BJ (cell line): ENCODE measurements at regions of chr11 and their contacts with region 1.

Region 1: GRCh38 chr11:62556108-62556871 is 9.7 kb upstream of the AHNAK start:
- DNase-seq: peak; percentile 81
- H3K4me3 ChIP-seq: 0 out of 2 replicates have a peak overlapping the region, but pooled peaks have one; percentile 10
- H3K27me3 ChIP-seq: no peaks in the 10 kb centered on the region
- CTCF ChIP-seq: no peak

Region 2: DNA sequence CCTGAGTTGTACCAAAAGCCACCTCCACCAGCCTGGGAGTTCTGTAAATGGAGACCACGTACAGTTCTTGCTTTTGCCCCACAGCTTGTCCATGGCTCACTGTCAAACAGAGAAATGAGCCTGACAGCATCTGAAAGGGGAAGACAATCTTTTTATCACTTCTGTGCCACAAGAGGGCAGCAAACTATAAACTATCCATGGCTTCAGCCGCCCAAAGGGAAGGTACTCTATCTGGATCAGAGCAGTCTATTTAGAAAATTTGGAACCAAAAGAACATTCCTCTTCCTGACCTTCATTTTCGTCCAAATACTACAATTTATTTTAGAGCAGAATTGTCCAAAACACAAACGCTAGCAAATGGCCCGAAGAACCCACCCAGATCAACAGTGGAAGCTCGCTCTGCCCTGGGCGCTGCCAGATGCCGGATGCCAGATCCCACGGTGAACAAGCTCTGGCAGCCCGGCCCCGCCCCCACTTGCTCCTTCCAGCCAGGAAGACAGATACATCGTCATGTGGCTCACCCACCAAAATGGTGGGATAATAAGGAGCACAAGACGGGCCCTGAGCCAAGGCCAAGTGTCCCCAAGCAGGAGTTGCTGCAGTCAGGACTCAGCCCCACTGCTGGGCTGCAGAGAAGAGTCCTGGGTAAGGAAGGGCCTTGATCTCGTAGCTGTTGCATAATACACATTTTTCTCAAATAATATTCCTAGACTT is 161.3 kb before region 1 on chr11:
- CTCF ChIA-PET with region 1: interaction called, 49 read pairs
- POLR2A ChIA-PET with region 1: no interaction called
- DNase-seq: peak; percentile 41
- H3K4me3 ChIP-seq: peak overlapping the region; percentile 13; the same call in 1 of the 2 replicates
- H3K27me3 ChIP-seq: peaks cover 6% of the 10 kb centered on the region
- CTCF ChIP-seq: peak; percentile 56

Region 3: GRCh38 chr11:62421996-62422395 is 134.3 kb before region 1 on chr11:
- CTCF ChIA-PET with region 1: interaction called, 66 read pairs
- POLR2A ChIA-PET with region 1: interaction called, 4 read pairs
- DNase-seq: no peak
- H3K4me3 ChIP-seq: no peak overlapping the region
- H3K27me3 ChIP-seq: no peaks in the 10 kb centered on the region; the same call in 1 of the 2 replicates
- CTCF ChIP-seq: no peak

Region 4: DNA sequence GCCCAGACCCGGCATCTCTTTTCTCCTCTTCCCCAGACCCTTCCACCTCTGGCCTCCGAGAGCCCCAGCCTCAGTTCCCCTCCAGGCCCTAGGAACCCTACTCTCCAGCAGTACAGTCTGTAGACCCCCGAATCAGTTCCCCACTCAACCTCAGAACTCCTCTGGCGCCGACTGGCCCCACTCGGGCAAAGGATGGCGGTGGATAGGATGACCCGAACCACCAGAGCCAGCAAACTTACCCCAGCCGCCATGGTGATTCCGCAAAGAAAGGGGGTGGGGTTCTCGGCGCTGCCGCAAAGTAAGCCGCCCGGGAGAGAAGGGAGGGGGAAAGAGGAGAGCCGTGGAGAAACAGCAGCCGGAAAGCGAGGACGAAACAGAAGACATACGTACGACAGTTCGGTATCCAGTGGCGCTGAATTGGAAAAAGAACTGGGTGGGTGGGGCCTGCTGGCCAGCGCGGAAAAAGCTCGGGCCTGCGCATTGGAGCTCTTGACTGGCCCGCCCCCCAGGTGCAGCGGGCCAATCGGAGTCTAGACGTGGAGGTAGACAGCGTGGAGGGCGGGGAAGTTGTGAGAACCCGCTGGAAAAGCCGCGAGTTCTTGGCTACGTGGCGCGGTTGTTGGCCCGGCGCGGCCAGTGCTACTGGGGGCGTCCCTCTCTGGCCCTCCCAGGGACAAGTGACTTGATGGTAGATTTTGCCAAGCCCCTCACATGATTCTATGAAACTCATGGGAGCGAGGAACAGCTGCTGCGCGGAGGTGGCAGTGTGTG is 17.5 kb after region 1 on chr11 and contains the start of gene EEF1G:
- CTCF ChIA-PET with region 1: interaction called, 31 read pairs
- POLR2A ChIA-PET with region 1: interaction called, 9 read pairs
- DNase-seq: peak; percentile 100
- H3K4me3 ChIP-seq: peak within 1 kb of the TSS; percentile 63
- H3K27me3 ChIP-seq: no peaks in the 10 kb centered on the region
- CTCF ChIP-seq: no peak
- polyA plus RNA-seq, gene EEF1G: 2,358 and 2,459 TPM in 2 replicates

Region 5: GRCh38 chr11:62665075-62665598 is 108.8 kb after region 1 on chr11 and contains the starts of genes C11orf98 and CSKMT:
- CTCF ChIA-PET with region 1: no interaction called
- POLR2A ChIA-PET with region 1: interaction called, 17 read pairs
- DNase-seq: no peak
- H3K4me3 ChIP-seq: peak within 1 kb of the TSS; percentile 72
- H3K27me3 ChIP-seq: no peaks in the 10 kb centered on the region
- CTCF ChIP-seq: no peak
- polyA plus RNA-seq, gene C11orf98: 43.0 and 45.2 TPM in 2 replicates
- polyA plus RNA-seq, gene CSKMT: 5.1 and 6.6 TPM in 2 replicates